Activated T-helper 2 cell treated with anti-CD3 and anti-CD28 coated beads, Interferon-gamma antibody, Interleukin-2, Interleukin-4, amounts not matched to agents 10 μg/mL and 5 μg/mL and 100 μg/mL, durations not matched to agents 14 hours and 24 hours and 36 hours (primary cell): ENCODE measurements at regions of chr6 and their contacts with region 1.

Region 1: GRCh38 chr6:40587240-40588069 is at the start of gene LRFN2:
- DNase-seq: peak; percentile 67
- H3K4me3 Mint-ChIP-seq: peak within 1 kb of the TSS; percentile 78
- H3K27ac Mint-ChIP-seq: no peak within 1 kb of the TSS
- H3K4me1 Mint-ChIP-seq: peaks cover 14% of the 10 kb centered on the region
- H3K27me3 Mint-ChIP-seq: peaks cover 55% of the 10 kb centered on the region
- total RNA-seq, gene LRFN2: not detected in 2 replicates

Region 2: DNA sequence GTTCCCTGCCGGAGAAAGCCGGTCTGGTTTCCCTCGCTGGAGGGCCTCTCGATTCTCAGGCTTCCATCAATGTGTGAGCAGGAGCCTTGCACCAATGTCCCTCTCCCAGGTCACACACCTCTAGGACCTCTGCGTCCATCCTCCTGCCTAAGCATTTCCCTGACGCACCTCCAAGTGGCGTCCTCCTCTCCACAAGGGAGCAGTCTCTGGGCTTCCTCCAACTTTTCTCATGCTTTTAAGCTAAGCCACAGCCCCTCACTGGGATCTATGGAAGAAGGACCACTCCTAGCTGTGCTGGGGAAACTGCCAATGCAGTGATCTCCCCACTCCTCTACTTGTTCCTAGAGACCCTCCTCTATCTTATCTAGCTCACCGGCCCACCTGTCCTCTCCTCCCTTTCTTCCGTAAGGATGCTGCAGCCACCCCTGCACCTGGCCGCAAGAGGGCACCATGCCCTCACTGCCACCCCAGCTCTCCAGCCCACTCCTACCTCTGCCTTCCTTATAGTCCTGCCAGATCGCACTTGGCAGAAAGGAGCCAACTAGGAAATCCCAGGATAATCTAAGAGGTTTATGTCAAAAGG is 259.0 kb before region 1 on chr6:
- intact Hi-C with region 1: loop called (anchors 10 kb)
- DNase-seq: peak; percentile 29
- H3K4me3 Mint-ChIP-seq: no peak overlapping the region
- H3K27ac Mint-ChIP-seq: no peak overlapping the region
- H3K4me1 Mint-ChIP-seq: peaks cover 15% of the 10 kb centered on the region
- H3K27me3 Mint-ChIP-seq: peaks cover 20% of the 10 kb centered on the region

Region 3: GRCh38 chr6:40520678-40521077 is 66.8 kb before region 1 on chr6:
- intact Hi-C with region 1: no loop called
- DNase-seq: no peak
- H3K4me3 Mint-ChIP-seq: no peak overlapping the region
- H3K27ac Mint-ChIP-seq: no peak overlapping the region
- H3K4me1 Mint-ChIP-seq: peaks cover 4% of the 10 kb centered on the region
- H3K27me3 Mint-ChIP-seq: peaks cover 17% of the 10 kb centered on the region